ENCODE measurements at regions of chrX and their contacts with region 1.

Region 1: DNA sequence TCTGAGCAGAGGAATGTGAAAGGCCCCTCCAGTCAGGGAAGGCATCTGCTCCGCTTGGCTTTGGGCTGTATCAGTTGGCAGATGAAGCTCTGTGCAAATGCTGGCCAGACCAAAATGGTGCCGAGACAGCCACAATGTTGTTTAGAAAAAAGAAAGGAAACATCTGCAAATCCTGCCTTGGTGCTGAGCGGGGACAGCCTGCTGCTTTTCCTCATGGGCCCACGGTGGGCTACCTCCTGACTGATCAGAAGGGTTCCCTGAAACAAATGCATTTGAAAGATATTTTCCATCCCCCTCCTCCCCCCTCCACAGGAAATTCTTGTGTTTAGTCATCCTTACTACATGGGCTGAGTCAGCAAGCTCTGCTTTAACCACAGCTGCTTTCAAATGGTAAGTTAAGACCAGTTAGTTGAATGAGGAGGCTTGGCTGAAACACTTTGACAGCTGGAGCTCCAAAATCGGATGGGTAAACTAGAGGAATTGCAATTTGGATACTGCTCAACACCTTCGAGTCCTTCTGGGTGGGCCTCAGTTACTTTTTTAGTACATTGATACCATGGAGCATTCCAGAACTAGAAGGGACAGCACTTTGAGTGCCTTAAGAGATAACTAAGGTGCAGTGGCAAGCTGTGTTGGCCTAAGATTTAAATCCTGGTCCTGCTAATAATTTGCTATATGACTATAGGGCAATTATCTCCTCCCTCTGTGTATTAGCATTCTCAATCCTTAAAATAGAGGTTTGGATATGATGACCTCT is 36.0 kb downstream of the PLAC1 start:
- DNase-seq: peak; percentile 6
- H3K4me3 Mint-ChIP-seq: no peak overlapping the region
- H3K27ac Mint-ChIP-seq: peak overlapping the region; percentile 34
- H3K4me1 Mint-ChIP-seq: peaks cover 27% of the 10 kb centered on the region
- H3K27me3 Mint-ChIP-seq: peaks cover 3% of the 10 kb centered on the region

Region 2: DNA sequence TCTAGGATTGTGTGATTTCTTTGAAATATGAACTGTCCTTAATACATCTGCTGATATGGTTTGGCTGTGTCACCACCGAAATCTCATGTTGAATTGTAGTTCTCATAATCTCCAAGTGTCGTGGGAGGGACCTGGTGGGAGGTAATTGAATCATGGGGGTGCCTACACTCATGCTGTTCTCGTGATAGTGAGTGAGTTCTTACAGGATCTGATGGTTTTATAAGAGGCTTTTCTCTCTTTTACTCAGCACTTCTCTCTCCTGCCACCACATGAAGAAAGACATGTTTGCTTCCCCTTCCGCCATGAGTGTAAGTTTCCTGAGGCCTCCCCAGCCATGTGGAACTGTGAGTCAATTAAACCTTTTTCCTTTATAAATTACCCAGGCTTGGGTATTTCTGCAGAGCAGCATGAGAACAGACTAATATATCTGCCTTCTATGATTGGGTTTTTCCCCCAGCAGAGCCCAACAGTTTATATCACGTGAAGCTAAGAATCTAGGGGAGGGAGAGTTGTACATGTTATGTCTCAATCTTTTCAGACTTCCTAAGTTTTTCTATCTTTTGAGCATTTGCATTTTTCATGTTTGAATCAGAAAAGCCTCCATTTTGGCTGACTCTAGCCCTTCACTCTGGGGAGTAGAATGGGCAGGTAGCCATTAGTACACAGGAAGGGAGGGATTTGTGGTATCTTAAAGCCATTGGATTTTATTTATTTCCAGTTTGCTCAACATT is 22.9 kb before region 1 on chrX:
- intact Hi-C with region 1: loop called (anchors 1 kb)
- DNase-seq: no peak
- H3K4me3 Mint-ChIP-seq: no peak overlapping the region
- H3K27ac Mint-ChIP-seq: no peak overlapping the region
- H3K4me1 Mint-ChIP-seq: peaks cover 3% of the 10 kb centered on the region
- H3K27me3 Mint-ChIP-seq: peaks cover 13% of the 10 kb centered on the region

Region 3: DNA sequence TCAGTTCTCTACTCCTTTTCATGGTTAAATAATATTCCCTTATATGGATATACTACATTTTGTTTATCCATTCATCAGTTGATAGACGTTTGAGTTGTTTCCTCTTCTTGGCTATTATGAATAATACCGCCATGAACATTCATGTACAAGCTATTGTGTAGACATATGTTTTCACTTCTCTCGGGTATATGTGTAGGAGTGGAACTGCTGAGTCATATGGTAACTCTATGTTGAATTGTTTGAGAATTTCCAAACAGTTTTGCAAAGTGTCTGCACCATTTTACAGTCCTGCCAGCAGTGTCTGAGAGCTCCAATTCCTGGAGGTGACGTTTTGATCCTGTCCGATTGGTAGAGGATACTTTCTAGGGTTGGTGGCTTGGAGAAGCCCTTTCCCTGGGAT is 12.5 kb after region 1 on chrX:
- intact Hi-C with region 1: loop called (anchors 1 kb)
- DNase-seq: no peak
- H3K4me3 Mint-ChIP-seq: no peak overlapping the region
- H3K27ac Mint-ChIP-seq: no peak overlapping the region
- H3K4me1 Mint-ChIP-seq: peaks cover 7% of the 10 kb centered on the region
- H3K27me3 Mint-ChIP-seq: peaks cover 2% of the 10 kb centered on the region

Region 4: GRCh38 chrX:134654398-134655012 is 32.3 kb after region 1 on chrX:
- intact Hi-C with region 1: loop called (anchors 1 kb)
- DNase-seq: no peak
- H3K4me3 Mint-ChIP-seq: no peak overlapping the region
- H3K27ac Mint-ChIP-seq: no peak overlapping the region
- H3K4me1 Mint-ChIP-seq: no peaks in the 10 kb centered on the region
- H3K27me3 Mint-ChIP-seq: peaks cover 1% of the 10 kb centered on the region

Region 5: GRCh38 chrX:134718105-134718965 is 96.1 kb after region 1 on chrX:
- intact Hi-C with region 1: loop called (anchors 10 kb)
- DNase-seq: no peak
- H3K4me3 Mint-ChIP-seq: no peak overlapping the region
- H3K27ac Mint-ChIP-seq: peak overlapping the region; percentile 58
- H3K4me1 Mint-ChIP-seq: peaks cover 10% of the 10 kb centered on the region
- H3K27me3 Mint-ChIP-seq: no peaks in the 10 kb centered on the region